ENCODE measurements at regions of chr5 and their contacts with region 1.

Region 1: GRCh38 chr5:77222722-77223121 is 12.2 kb downstream of the PDE8B start:
- DNase-seq: no peak

Region 2: DNA sequence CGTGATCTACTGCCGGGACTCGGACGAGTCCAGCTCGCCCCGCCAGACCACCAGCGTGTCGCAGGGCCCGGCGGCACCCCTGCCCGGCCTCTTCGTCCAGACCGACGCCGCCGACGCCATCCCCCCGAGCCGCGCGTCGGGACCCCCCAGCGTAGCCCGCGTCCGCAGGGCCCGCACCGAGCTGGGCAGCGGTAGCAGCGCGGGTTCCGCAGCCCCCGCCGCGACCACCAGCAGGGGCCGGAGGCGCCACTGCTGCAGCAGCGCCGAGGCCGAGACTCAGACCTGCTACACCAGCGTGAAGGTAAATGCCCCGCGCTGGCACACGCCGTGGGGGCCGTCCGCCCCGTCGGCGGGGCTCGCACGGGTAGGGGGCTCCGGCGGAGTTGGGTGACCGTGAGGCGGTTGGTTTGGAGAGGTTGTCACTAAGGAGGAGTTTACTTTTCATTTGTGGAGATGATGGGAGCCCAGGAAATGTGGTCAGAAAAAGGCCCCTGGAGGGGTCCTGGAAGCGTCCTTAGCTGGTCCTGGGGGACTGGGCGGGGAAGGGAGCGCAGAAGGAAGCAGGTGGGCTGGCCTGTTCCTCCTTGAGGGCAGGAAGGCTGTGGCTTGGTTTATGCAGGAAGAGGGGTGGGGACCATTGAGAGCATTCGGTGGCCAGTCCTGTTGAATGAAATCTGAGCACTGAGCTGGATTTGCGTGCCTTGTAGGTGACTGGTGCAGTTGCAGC is 11.6 kb before region 1 on chr5:
- intact Hi-C with region 1: loop called in 1 of 2 experiments (anchors 1 kb)
- DNase-seq: no peak